RWPE1 (cell line): ENCODE measurements at regions of chr2 and their contacts with region 1.

Region 1: GRCh38 chr2:38947240-38948239 is 57.9 kb downstream of the ARHGEF33 start:
- DNase-seq: peak; percentile 86
- H3K27ac ChIP-seq: no peak overlapping the region
- CTCF ChIP-seq: peak; percentile 79

Region 2: DNA sequence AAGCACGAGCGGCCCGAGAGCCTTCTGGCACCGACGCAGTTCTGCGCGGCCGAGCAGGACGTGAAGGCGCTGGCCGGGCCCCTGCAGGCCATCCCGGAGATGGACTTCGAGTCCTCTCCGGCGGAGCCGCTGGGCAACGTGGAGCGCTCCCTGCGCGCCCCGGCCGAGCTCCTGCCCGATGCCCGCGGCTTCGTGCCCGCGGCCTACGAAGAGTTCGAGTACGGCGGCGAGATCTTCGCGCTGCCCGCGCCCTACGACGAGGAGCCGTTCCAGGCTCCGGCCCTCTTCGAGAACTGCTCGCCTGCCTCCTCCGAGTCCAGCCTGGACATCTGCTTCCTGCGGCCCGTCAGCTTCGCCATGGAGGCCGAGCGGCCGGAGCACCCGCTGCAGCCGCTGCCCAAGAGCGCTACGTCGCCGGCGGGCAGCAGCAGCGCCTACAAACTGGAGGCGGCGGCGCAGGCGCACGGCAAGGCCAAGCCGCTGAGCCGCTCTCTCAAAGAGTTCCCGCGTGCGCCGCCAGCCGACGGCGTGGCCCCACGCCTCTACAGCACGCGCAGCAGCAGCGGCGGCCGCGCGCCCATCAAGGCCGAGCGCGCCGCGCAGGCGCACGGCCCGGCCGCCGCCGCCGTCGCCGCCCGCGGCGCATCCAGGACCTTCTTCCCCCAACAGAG is 12.5 kb after region 1 on chr2:
- CTCF ChIA-PET with region 1: interaction called, 13 read pairs
- POLR2A ChIA-PET with region 1: no interaction called
- DNase-seq: peak; percentile 62
- H3K27ac ChIP-seq: no peak overlapping the region
- CTCF ChIP-seq: no peak; the same call in 1 of the 2 replicates

Region 3: GRCh38 chr2:39024833-39025232 is 77.3 kb after region 1 on chr2:
- CTCF ChIA-PET with region 1: no interaction called
- POLR2A ChIA-PET with region 1: no interaction called
- DNase-seq: peak; percentile 50
- H3K27ac ChIP-seq: no peak overlapping the region
- CTCF ChIP-seq: no peak

Region 4: DNA sequence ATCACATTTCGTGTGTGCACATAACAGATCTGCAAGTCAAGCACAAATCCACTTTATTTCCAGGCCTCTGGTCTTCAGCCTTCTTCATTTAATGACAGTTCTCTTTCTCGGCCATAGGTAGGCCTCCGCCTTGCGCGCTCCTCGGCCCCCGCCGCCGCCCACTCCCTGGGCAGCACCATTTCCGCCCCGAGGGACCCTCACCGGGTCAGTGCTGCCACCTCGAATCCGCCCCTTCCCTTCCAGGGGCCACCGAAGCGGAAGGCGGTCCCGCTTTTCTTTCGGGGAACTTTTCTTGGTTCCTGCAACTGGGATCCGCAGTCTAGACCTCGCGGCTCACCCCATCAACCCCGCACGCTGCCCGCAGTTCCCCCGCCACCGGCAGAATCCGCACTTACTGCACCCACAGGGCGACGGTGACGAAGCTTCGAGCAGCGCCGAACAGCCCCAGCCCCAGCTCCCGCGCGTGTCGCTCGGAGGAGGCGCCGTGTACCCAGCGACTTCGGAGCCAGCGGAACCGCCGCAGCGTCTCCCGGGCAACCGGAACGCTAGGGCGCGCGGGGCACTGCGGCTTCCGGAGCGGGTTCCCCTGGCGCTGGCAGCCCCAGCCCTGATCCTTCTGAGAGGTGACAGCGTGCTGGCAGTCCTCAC is 296.1 kb after region 1 on chr2 and contains the start of gene CDKL4:
- CTCF ChIA-PET with region 1: no interaction called
- POLR2A ChIA-PET with region 1: no interaction called
- DNase-seq: peak; percentile 25
- H3K27ac ChIP-seq: peak within 1 kb of the TSS; percentile 62
- CTCF ChIP-seq: no peak